GM18951 (cell line): ENCODE measurements at regions of chr17 and their contacts with region 1.

Region 1: GRCh38 chr17:9021158-9021991 is at the start of gene NTN1:
- POLR2A ChIP-seq: no peak

Region 2: DNA sequence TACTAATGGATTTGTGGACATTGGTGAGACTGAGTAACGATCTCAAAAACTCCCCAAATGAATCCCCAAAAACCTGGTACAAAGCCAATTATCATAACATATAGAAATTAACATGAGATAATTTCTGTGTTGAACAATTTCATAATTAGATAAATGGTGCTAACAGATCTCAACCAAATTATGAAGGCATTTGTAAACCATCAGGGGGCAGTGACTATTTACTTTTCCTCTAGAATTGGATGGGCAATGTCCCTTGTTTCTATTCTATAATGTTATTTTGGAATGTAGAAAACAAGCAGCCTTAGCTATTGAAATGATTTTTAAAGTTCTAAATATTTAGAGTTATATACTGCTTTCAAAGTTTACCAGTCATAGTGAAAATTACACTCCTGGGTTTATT is 448.6 kb before region 1 on chr17:
- in situ Hi-C with region 1: loop called (anchors 25 kb)
- POLR2A ChIP-seq: no peak

Region 3: DNA sequence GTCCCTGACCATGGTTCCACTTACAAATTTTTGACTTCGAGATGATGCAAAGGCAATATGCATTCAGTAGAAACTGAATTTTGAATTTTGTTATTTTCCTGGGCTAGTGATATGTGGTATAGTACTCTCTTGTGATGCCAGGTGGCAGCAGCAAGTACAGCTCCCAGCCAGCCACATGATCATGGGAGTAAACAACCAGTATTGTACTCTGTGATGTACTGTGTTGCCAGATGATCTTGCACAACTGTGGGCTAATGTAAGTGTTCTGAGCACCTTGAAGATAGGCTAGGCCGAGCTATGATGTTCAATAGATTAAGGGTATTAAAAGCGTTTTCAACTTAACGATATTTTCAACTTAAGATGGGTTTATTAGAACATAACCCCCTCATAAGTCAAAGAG is 303.5 kb after region 1 on chr17:
- in situ Hi-C with region 1: no loop called
- POLR2A ChIP-seq: no peak